ENCODE measurements at regions of chr2 and their contacts with region 1.

Region 1: GRCh38 chr2:6917071-6917760 is at the start of gene RNF144A:
- ATAC-seq: peak; percentile 82 to 91 (median 88)
- H3K4me3 ChIP-seq: peak within 1 kb of the TSS; percentile 75 to 99 (median 87)
- H3K27ac ChIP-seq: peak within 1 kb of the TSS; percentile 73 to 81
- H3K4me1 ChIP-seq: peaks cover 22 to 41% of the 10 kb centered on the region in 2 donors
- total RNA-seq, gene RNF144A: 8.3 to 34.8 (median 22.5) TPM

Region 2: GRCh38 chr2:7014174-7014640 is 97.0 kb after region 1 on chr2:
- in situ Hi-C with region 1: loop called in 1 of 9 experiments (anchors 25 kb)
- ATAC-seq: peak in 3 of 8 experiments; percentile 3 to 33 (median 7)
- H3K4me3 ChIP-seq: no peak overlapping the region
- H3K27ac ChIP-seq: no peak overlapping the region
- H3K4me1 ChIP-seq: peaks cover 82 to 83% of the 10 kb centered on the region in 2 donors

Region 3: DNA sequence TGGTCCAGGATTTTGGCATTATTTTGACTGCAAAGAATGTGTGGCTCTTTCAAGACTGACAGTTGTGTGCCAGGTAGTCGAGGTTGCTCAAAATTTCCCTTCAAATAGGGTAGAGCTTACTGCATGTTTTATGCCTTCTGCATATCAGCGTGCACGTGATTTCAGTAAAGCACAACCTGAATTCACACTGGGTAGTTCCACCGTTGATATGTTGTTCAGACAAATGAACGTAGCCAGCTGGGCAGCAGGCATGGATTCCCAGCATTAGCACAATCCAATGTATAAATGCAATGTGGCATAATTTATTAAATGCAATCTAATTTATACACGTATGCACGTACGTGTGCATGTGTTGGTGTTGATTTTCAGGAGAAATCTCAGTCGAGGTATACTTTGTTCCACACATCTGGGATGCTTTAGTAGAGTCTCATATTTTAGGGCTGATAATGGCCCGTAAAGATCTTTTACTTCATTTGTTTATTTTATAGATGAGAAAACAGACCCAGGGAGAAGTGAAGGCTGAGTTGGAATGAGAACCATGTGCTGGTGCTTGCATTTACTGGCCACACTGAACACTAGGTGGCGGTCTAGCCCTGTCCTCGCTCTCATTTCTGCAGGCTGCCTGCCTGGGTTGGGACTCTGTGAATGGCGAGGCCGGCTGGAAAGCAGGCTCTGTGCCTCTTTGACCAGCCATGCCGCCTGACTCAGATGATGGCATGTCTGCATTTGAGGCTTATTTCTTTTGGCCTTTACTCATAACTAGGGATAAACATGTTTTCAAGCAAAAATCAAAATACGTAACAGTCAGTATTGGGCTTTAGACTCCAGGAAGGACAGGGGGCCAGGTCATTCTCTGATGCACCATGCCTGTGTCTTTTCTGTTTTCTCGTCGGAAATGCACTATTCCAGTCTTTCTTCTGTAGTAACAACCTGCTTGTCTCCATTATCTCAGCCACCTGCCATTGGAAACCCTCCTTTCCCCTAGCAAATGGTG is 120.4 kb after region 1 on chr2:
- in situ Hi-C with region 1: loop called in 1 of 9 experiments (anchors 25 kb)
- ATAC-seq: peak; percentile 76 to 100 (median 96)
- H3K4me3 ChIP-seq: no peak overlapping the region
- H3K27ac ChIP-seq: no peak overlapping the region
- H3K4me1 ChIP-seq: peaks cover 0 to 4% of the 10 kb centered on the region in 2 donors